Activated CD4-positive, alpha-beta T cell treated with anti-CD3 and anti-CD28 coated beads, Interleukin-2, amount 10 ng/mL, durations not matched to agents 24 days and 14 days (primary cell): ENCODE measurements at regions of chr3 and their contacts with region 1.

Region 1: GRCh38 chr3:143972505-143973255 is 1.1 kb downstream of the DIPK2A start:
- DNase-seq: peak; percentile 92
- H3K4me3 Mint-ChIP-seq: peak overlapping the region; percentile 98
- H3K27ac Mint-ChIP-seq: peak overlapping the region; percentile 96
- H3K4me1 Mint-ChIP-seq: peaks cover 35% of the 10 kb centered on the region
- H3K27me3 Mint-ChIP-seq: peaks cover 16% of the 10 kb centered on the region

Region 2: DNA sequence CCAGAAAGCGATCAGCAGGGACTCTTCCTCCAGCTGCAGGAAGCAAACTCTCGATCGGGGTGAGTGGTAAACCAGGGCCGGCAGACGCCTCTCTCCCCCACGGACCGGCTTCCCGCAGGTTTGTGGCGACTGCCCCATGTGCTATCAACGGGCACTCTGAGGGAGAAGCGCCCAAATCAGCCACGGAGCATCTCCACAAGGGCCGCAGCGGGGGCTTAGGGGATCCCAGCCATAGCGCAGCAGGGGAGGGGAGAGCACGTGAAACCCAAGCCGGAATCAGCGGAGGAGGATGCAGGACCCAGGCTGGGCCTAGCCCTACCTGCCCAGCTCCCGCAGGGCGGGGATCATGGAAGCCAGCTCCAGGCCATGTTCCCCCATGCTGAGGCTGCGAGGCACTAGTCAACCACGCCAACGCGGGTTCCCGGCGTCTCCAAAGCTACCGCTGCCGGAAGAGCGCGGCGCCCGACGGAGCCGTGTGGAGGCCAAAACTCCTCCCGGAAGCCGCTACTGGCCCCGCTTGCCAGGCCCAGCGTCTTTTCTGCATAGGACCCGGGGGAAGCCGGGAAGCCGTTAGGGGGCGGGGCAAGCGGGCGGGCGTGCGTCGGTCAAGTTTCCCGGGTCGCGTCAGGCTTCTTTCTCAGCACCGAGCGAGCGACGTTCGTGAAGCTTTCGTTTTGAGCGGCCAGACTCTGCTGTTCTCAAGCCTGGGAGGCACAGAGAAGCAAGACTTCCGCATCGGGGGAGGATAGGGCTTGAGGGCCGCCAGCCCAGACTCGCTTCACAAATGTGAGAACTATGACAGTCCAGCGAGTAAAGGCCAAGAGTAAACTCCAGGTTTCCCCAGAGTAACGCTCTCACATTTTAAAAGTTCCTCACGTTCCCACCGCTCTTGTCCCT is 1394.1 kb before region 1 on chr3 and contains the start of gene ATR:
- intact Hi-C with region 1: loop called (anchors 5 kb)
- DNase-seq: peak; percentile 99
- H3K4me3 Mint-ChIP-seq: peak within 1 kb of the TSS; percentile 99
- H3K27ac Mint-ChIP-seq: peak within 1 kb of the TSS; percentile 99
- H3K4me1 Mint-ChIP-seq: peaks cover 42% of the 10 kb centered on the region
- H3K27me3 Mint-ChIP-seq: peaks cover 15% of the 10 kb centered on the region
- total RNA-seq, gene ATR: 34.2 and 35.0 TPM in 2 replicates

Region 3: DNA sequence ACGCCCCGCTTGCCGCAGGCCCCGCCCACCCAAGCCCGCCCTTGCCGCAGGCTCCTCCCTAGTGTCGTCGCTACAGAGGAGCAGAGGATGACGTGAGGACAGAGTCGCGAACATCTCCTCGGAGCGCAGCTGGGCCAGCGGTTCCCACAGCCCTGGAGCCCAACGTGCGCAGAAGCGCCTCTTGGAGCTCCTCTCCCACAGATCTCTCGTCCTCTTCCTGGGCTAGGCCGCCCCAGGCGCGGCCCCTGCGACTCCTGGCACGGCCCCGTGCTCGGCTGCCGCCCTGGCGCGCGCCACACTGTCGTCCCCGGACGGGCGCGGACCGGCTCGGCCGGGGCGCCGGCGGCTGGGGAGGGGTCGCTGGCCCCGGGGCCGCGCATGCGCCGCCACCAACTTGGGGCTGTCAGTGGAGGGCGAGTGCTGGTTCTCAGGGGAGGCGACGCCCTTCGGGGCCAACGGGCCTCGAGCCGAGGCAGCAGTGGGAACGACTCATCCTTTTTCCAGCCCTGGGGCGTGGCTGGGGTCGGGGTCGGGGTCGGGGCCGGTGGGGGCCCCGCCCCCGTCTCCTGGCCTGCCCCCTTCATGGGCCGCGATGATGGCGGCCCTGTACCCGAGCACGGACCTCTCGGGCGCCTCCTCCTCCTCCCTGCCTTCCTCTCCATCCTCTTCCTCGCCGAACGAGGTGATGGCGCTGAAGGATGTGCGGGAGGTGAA is 1248.6 kb before region 1 on chr3 and contains the start of gene TRPC1:
- intact Hi-C with region 1: loop called (anchors 5 kb)
- DNase-seq: peak; percentile 92
- H3K4me3 Mint-ChIP-seq: peak within 1 kb of the TSS; percentile 89
- H3K27ac Mint-ChIP-seq: peak within 1 kb of the TSS; percentile 75
- H3K4me1 Mint-ChIP-seq: peaks cover 10% of the 10 kb centered on the region
- H3K27me3 Mint-ChIP-seq: peaks cover 63% of the 10 kb centered on the region
- total RNA-seq, gene TRPC1: 0.92 and 1.7 TPM in 2 replicates

Region 4: GRCh38 chr3:143775459-143775858 is 197.2 kb before region 1 on chr3:
- intact Hi-C with region 1: loop called (anchors 5 kb)
- DNase-seq: peak; percentile 68
- H3K4me3 Mint-ChIP-seq: no peak overlapping the region
- H3K27ac Mint-ChIP-seq: no peak overlapping the region
- H3K4me1 Mint-ChIP-seq: no peaks in the 10 kb centered on the region
- H3K27me3 Mint-ChIP-seq: peaks cover 2% of the 10 kb centered on the region

Region 5: DNA sequence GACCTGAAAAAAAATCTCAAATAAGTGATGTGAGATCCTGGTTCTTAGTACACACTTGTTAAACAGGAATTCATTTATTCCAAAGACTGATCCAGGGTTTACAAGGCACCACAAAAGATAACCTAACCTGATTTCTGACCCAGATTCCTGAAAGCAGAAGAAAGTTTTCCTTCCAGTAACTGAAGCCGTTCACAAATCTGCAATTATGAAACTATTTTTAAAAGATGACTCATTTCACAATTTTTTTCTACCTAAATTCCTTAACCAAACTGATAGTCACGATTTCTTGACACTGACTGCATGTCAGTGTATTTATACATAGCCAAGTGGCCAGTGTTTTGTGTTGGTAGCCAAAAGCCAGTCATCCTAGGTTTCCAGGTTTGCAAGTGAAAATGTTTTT is 141.5 kb before region 1 on chr3:
- intact Hi-C with region 1: loop called (anchors 5 kb)
- DNase-seq: no peak
- H3K4me3 Mint-ChIP-seq: peak overlapping the region; percentile 38
- H3K27ac Mint-ChIP-seq: peak overlapping the region; percentile 19
- H3K4me1 Mint-ChIP-seq: peaks cover 27% of the 10 kb centered on the region
- H3K27me3 Mint-ChIP-seq: no peaks in the 10 kb centered on the region

Region 6: DNA sequence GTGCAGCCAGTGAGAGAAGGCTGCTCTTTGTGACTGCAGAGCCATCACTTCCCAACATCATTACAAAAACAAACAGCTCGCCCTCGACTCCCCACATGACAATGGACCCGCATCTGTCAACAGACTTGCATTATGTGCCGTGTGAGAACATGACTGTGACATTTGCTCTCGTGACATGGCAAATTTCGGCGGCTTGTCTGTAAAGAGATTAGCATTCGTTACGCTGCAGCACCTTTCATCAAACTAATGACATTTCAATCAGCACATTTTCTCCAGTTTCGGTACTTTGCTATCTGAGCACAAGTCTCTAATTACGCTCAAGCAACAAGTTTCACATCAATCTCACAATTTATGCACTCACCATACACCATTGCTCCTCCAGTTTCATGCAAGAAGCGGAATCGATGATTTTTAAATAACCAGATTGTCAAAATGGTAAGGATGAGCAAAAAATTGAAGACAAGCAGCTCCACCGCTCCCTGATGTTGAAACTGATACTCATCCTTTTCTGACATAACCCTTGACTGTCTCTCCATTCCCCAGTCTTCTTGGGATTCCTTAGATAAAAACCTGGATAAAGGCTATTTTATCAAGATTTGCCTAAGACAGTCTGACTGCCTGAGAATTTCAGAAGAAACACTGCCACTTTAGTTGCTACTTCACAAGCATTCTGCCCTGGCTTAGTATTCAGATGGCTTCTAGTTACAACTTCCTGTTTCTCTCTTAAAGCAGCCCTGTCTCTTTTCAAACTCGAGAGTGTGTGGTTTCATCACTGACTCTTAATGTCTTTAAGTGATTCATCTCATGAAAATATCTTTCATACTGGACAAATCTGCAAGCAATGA is 124.7 kb before region 1 on chr3 and contains the start of gene SLC9A9:
- intact Hi-C with region 1: loop called (anchors 1 kb)
- DNase-seq: peak; percentile 77
- H3K4me3 Mint-ChIP-seq: peak within 1 kb of the TSS; percentile 92
- H3K27ac Mint-ChIP-seq: peak within 1 kb of the TSS; percentile 87
- H3K4me1 Mint-ChIP-seq: peaks cover 46% of the 10 kb centered on the region
- H3K27me3 Mint-ChIP-seq: peaks cover 6% of the 10 kb centered on the region
- total RNA-seq, gene SLC9A9: 1.1 and 1.3 TPM in 2 replicates

Region 7: GRCh38 chr3:144032531-144033239 is 60.0 kb after region 1 on chr3:
- intact Hi-C with region 1: loop called (anchors 5 kb)
- DNase-seq: no peak
- H3K4me3 Mint-ChIP-seq: no peak overlapping the region
- H3K27ac Mint-ChIP-seq: no peak overlapping the region
- H3K4me1 Mint-ChIP-seq: peaks cover 4% of the 10 kb centered on the region
- H3K27me3 Mint-ChIP-seq: peaks cover 10% of the 10 kb centered on the region